ENCODE measurements at regions of chr12 and their contacts with region 1.

Region 1: GRCh38 chr12:14995583-14996425 is 23.0 kb downstream of the PDE6H start:
- DNase-seq: no peak
- ATAC-seq: peak; percentile 55 to 78

Region 2: GRCh38 chr12:14723763-14724162 is 272.0 kb before region 1 on chr12:
- intact Hi-C with region 1: loop called (anchors 2 to 10 kb)
- DNase-seq: peak; percentile 51
- ATAC-seq: peak; percentile 87 to 98

Region 3: DNA sequence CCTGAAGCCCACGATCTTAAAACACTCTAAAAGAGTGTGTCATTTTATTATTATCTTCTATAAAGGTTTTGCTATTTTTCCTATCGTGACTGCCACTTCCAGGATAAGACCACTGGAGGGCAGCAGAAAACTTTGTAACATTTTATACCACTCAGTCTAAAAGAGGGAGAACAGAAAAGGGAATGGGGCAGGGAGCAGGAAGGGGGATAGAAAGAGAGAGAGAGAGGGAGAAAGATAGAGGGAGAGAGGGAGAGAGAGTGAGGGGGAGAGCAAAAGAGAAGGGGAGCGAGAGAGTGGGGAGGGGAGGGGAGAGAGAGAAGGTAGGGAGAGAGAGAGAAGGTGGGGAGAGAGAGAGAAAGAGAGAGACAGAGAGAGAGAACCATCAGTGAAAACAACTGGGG is 150.5 kb before region 1 on chr12:
- intact Hi-C with region 1: loop called (anchors 1 to 2 kb)
- DNase-seq: peak; percentile 35
- ATAC-seq: peak; percentile 48 to 59

Measured in left cardiac atrium (tissue), 4 donors.